ENCODE measurements at regions of chr14 and their contacts with region 1.

Region 1: GRCh38 chr14:47637753-47638152 is 37.7 kb downstream of the MDGA2 start:
- DNase-seq: no peak
- H3K4me3 ChIP-seq: no peak overlapping the region
- H3K27ac ChIP-seq: no peak overlapping the region
- H3K27me3 ChIP-seq: no peaks in the 10 kb centered on the region
- CTCF ChIP-seq: no peak

Region 2: DNA sequence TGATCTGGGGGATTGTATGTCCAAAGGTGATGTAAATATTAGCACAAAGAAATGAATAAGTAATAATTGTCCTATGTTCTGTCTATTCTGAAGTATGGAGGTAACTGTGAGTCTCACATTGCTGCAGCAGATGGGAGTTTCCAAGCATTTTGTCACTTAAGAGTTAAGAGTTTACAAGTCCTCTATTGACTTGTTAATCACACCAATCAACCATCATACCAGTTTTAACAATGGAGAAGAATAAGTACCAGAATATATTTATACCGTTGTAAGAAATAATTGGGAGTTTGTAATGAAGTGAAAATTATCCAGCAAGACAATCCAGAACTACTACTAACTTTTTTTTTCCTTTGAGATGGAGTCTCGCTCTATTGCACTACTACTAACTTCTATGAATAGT is 101.4 kb before region 1 on chr14:
- CTCF ChIA-PET with region 1: no interaction called
- POLR2A ChIA-PET with region 1: no interaction called
- DNase-seq: no peak
- H3K4me3 ChIP-seq: no peak overlapping the region
- H3K27ac ChIP-seq: no peak overlapping the region
- H3K27me3 ChIP-seq: no peaks in the 10 kb centered on the region
- CTCF ChIP-seq: no peak

Region 3: DNA sequence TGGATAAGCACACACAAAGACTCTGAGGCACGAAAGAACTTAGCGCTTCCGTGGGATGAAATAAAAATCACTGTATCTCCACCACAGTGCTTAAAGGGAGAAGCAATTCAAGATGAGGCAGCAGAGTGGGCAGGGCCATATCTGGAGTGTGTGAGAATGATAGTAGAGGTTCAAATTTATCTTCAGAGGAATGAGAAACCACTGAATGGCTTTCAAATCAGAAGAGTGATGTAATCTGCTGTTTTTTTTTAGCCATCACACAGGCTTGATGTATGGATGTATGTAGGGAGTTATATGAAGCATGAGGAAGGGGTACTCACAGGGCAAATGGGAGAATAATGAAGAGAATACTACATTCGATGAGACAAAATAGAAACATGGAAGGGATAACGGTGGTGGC is 13.6 kb after region 1 on chr14:
- CTCF ChIA-PET with region 1: no interaction called
- POLR2A ChIA-PET with region 1: no interaction called
- DNase-seq: no peak
- H3K4me3 ChIP-seq: no peak overlapping the region
- H3K27ac ChIP-seq: no peak overlapping the region
- H3K27me3 ChIP-seq: no peaks in the 10 kb centered on the region
- CTCF ChIP-seq: no peak

Region 4: DNA sequence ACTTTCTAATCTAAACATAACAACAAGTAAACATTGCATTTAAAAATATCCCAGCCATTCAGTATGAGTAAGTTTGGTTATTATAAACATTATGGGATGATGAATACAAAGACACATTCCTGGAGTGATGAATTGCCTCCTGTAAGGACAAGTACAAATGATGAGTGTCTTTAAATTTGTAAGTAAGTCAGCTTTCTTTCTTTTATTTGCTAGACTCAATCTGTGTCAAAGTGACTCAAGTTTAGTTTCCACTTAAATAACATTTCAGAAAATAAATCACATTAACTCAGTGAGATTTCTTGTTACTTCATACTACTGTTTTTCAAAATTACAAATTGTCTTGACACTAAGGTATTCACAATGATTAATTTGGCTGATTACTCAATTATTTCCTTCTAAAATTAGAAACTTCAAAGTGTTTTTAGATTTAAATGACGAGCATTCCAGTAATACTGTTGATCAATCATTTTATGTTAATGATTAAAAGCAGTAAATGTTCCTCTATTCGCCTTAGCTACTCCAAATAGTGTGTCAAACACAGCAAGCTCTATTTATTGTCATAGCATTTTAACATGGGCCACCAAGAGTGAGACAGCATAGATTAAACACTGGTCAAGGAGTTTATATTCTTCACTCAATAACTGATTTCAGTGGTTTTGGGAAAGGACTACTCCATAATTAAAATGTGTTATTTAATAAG is 695.6 kb after region 1 on chr14:
- CTCF ChIA-PET with region 1: interaction called, 11 read pairs
- POLR2A ChIA-PET with region 1: no interaction called
- DNase-seq: no peak
- H3K4me3 ChIP-seq: no peak overlapping the region
- H3K27ac ChIP-seq: no peak overlapping the region
- H3K27me3 ChIP-seq: no peaks in the 10 kb centered on the region
- CTCF ChIP-seq: no peak

Region 5: DNA sequence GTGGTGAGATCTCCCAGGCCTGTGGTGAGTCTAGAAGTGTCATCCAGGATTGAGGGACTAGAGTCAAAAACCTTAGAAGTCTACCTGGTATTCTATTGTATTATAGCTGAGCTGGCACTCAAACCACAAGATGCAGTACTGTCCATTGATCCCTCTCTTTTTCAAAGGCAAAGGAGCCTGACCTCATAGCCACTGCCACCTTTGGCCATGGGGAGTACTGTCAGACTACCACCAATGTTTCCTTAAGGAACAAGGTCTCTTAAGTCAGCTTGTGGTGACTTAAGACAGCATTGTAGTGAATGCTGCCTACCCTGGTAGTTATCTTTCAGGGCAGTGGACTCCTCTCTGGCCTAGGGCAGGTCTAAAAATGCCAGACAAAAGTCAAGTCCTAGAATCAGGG is 915.7 kb after region 1 on chr14:
- CTCF ChIA-PET with region 1: no interaction called
- POLR2A ChIA-PET with region 1: no interaction called
- DNase-seq: no peak
- H3K4me3 ChIP-seq: no peak overlapping the region
- H3K27ac ChIP-seq: no peak overlapping the region
- H3K27me3 ChIP-seq: no peaks in the 10 kb centered on the region
- CTCF ChIP-seq: no peak